Activated B cell treated with CpG ODN at 0.5 μM for 24 hours (primary cell): ENCODE measurements at regions of chr4 and their contacts with region 1.

Region 1: GRCh38 chr4:85658766-85659439 is 184.0 kb downstream of the ARHGAP24 start:
- DNase-seq: no peak
- ATAC-seq: no peak
- H3K4me3 Mint-ChIP-seq: peak overlapping the region; percentile 5
- H3K27ac Mint-ChIP-seq: peak overlapping the region; percentile 89
- H3K4me1 Mint-ChIP-seq: peaks cover 52% of the 10 kb centered on the region
- H3K27me3 Mint-ChIP-seq: no peaks in the 10 kb centered on the region
- CTCF ChIP-seq: no peak

Region 2: GRCh38 chr4:85607624-85608023 is 51.3 kb before region 1 on chr4:
- CTCF ChIA-PET with region 1: no interaction called
- POLR2A ChIA-PET with region 1: no interaction called
- intact Hi-C with region 1: loop called (anchors 2 kb)
- DNase-seq: no peak
- ATAC-seq: peak; percentile 90
- H3K4me3 Mint-ChIP-seq: peak overlapping the region; percentile 70
- H3K27ac Mint-ChIP-seq: peak overlapping the region; percentile 92
- H3K4me1 Mint-ChIP-seq: peaks cover 50% of the 10 kb centered on the region
- H3K27me3 Mint-ChIP-seq: no peaks in the 10 kb centered on the region
- CTCF ChIP-seq: no peak

Region 3: DNA sequence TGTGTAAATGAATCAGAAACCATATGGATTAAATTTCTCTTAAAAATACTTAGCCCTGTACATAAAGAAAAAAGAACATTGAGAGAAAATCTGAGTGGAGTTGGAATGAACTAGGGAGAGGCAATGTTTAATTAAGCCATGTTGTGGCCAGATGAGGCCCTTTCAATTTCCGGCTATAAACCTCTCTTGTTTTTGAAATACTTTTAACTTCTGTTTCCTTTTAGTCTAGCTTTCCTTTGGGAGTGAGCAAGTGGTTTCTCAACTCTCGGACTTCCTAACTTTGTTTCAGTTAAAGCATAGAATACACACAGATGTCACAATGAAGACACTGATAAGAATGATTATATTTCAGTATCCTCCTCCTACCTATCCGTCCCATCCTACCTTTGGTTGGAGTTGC is 13.2 kb after region 1 on chr4:
- CTCF ChIA-PET with region 1: interaction called, 4 read pairs
- POLR2A ChIA-PET with region 1: interaction called, 4 read pairs
- intact Hi-C with region 1: loop called (anchors 1 kb)
- DNase-seq: no peak
- ATAC-seq: no peak
- H3K4me3 Mint-ChIP-seq: peak overlapping the region; percentile 17
- H3K27ac Mint-ChIP-seq: peak overlapping the region; percentile 46
- H3K4me1 Mint-ChIP-seq: peaks cover 79% of the 10 kb centered on the region
- H3K27me3 Mint-ChIP-seq: no peaks in the 10 kb centered on the region
- CTCF ChIP-seq: no peak

Region 4: GRCh38 chr4:85701861-85702321 is 43.0 kb after region 1 on chr4:
- CTCF ChIA-PET with region 1: no interaction called
- POLR2A ChIA-PET with region 1: interaction called, 11 read pairs
- intact Hi-C with region 1: loop called (anchors 1 kb)
- DNase-seq: no peak
- ATAC-seq: peak; percentile 80
- H3K4me3 Mint-ChIP-seq: peak overlapping the region; percentile 70
- H3K27ac Mint-ChIP-seq: peak overlapping the region; percentile 93
- H3K4me1 Mint-ChIP-seq: peaks cover 73% of the 10 kb centered on the region
- H3K27me3 Mint-ChIP-seq: no peaks in the 10 kb centered on the region
- CTCF ChIP-seq: no peak